GM13976 (cell line): ENCODE measurements at regions of chr16 and their contacts with region 1.

Region 1: GRCh38 chr16:25066747-25067631 is 44.6 kb upstream of the LCMT1 start:
- DNase-seq: peak; percentile 98
- CTCF ChIP-seq: no peak

Region 2: DNA sequence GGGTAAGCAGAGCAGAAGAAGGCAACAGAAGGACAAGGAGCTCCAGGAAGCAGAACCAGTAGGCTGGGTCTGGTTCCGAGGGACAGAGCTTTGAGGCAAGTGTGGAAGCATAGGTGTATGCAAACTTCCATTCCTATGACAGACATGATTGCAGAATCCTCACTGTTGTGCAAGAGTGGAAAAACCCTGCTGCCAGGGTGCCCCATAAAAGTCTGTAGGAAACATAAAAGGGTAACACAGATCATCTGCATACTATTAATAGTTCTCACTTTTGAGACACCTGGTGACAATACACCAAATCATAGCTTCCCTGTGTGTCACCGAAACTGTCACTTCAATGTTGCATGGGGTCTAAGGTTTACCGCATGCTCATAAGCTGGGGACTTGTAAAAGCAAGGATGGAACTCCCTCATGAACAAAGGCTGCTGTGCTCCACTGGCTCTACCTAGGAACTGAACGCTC is 91.5 kb before region 1 on chr16:
- in situ Hi-C with region 1: no loop called
- DNase-seq: peak; percentile 64
- CTCF ChIP-seq: no peak

Region 3: GRCh38 chr16:25006469-25007055 is 60.4 kb before region 1 on chr16:
- in situ Hi-C with region 1: no loop called
- DNase-seq: no peak
- CTCF ChIP-seq: no peak

Region 4: DNA sequence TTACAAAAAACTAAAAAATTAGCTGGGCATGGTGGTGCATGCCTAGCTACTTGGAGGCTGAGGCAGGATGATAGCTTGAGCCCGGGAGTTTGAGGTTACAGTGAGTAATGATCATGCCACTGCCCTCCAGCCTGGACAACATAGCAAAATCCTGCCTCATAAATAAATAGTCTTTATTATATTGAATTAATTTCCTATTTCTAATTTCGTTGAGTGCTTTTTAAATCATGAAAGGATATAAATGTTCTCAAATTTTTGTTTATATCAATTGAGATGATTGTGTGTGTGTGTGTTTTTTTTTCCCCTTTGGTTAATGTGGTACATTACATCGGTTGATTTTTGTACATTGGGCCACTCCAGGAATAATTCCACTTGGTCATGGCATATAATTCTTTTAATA is 117.8 kb after region 1 on chr16:
- in situ Hi-C with region 1: no loop called
- DNase-seq: no peak
- CTCF ChIP-seq: no peak

Region 5: GRCh38 chr16:25224731-25225319 is 157.8 kb after region 1 on chr16:
- in situ Hi-C with region 1: loop called (anchors 10 kb)
- DNase-seq: no peak
- CTCF ChIP-seq: no peak

Region 6: DNA sequence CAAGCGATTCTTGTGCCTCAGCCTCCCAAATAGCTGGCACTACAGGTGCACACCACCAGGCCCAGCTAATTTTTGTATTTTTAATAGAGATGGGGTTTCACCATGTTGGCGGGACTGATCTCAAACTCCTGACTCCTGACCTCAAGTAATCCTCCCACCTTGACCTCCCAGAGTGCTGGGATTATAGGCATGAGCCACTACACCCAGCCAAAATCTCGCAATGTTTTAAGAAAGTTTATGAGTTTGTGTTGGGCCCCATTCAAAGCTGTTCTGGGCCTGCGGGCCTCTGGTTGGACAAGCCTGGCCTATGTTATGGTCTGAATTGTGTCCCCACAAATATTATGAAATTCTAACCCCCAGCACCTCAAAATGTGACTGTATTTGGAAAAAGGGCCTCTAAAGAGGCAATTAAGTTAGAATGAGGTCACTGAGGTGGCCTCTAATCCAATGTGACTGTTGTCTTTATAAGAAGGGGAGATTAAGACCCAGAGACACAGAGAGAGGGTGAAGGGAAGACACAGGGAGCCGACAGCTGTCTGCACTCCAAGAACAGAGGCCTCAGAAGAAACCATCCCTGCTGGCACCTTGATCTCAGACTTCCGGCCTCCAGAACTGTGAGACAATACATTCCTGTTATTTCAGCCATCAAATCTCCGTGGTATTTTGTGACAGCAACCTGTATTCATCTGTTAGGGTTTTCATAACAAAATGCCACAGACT is 1094.6 kb after region 1 on chr16:
- in situ Hi-C with region 1: no loop called
- DNase-seq: no peak
- CTCF ChIP-seq: no peak